Activated B cell treated with CpG ODN at 0.5 μM for 24 hours (primary cell): ENCODE measurements at regions of chr11 and their contacts with region 1.

Region 1: GRCh38 chr11:36564376-36565030 is 3.3 kb upstream of the RAG1 start:
- DNase-seq: no peak
- ATAC-seq: no peak
- H3K4me3 Mint-ChIP-seq: peak overlapping the region; percentile 57
- H3K27ac Mint-ChIP-seq: no peak overlapping the region
- H3K4me1 Mint-ChIP-seq: peaks cover 6% of the 10 kb centered on the region
- H3K27me3 Mint-ChIP-seq: peaks cover 41% of the 10 kb centered on the region
- CTCF ChIP-seq: no peak

Region 2: GRCh38 chr11:36672813-36673450 is 108.4 kb after region 1 on chr11:
- CTCF ChIA-PET with region 1: interaction called, 17 read pairs
- POLR2A ChIA-PET with region 1: no interaction called
- intact Hi-C with region 1: loop called (anchors 1 kb)
- DNase-seq: no peak
- ATAC-seq: no peak
- H3K4me3 Mint-ChIP-seq: no peak overlapping the region
- H3K27ac Mint-ChIP-seq: no peak overlapping the region
- H3K4me1 Mint-ChIP-seq: no peaks in the 10 kb centered on the region
- H3K27me3 Mint-ChIP-seq: peaks cover 5% of the 10 kb centered on the region
- CTCF ChIP-seq: peak; percentile 92